H1 (cell line): ENCODE measurements at regions of chr11 and their contacts with region 1.

Region 1: DNA sequence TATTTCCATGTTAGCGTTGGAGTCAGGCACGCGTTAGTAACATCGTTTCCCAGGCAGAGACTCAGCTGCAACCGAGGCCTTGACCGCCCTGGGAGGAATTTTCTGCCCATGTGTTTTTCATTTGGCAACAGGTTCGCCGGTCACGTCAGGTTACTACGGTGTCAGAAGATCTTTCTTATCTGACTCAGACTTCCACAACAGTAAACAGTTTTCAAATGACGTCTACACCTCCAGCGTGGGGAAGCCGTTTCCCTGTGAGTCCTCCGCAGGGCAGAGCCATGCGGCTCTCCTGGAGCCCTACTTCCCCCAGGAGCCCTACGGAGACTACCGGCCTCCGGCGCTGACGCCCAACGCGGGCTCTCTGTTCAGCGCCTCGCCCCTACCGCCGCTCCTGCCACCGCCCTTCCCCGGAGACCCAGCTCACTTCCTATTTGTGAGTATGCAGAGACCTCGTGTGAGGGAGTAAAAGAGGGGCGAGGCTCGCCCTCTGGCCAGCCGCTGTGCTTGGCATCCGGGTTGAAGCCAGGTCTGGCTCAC is 14.3 kb upstream of the POU2AF3 start:
- DNase-seq: no peak
- H3K4me3 ChIP-seq: no peak overlapping the region
- H3K27ac ChIP-seq: no peak overlapping the region
- H3K4me1 ChIP-seq: peaks cover 0 to 3% (median 0%) of the 10 kb centered on the region in 4 experiments; a peak in 2 of 7 replicates
- H3K27me3 ChIP-seq: no peaks in the 10 kb centered on the region
- CTCF ChIP-seq: no peak
- EP300 ChIP-seq: no peak
- POLR2A ChIP-seq: no peak
- RAD21 ChIP-seq: no peak

Region 2: DNA sequence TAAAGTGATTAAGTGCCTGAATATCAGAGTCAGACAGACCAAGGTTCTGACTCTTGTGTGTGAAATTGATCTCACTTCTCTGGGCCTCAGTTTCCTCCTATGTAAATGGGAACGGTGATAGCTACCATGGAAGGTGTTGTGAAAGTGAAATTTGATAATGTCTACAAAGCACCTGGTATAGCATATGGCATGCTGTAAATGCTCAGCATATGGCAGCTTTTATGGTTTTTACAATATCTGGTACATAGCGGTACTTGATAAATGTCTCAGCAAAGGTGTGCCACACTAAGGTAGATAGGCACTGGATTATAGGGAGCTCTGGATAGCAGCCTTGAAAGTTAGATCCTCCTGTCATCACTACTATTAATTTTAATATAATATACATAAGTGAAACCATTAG is 18.6 kb before region 1 on chr11:
- CTCF ChIA-PET with region 1: interaction called, 11 read pairs
- POLR2A ChIA-PET with region 1: no interaction called
- DNase-seq: no peak
- H3K4me3 ChIP-seq: no peak overlapping the region
- H3K27ac ChIP-seq: no peak overlapping the region
- H3K4me1 ChIP-seq: no peaks in the 10 kb centered on the region
- H3K27me3 ChIP-seq: no peaks in the 10 kb centered on the region
- CTCF ChIP-seq: no peak
- EP300 ChIP-seq: no peak
- POLR2A ChIP-seq: no peak
- RAD21 ChIP-seq: no peak

Region 3: GRCh38 chr11:111299101-111300026 is 15.4 kb after region 1 on chr11:
- CTCF ChIA-PET with region 1: interaction called, 11 read pairs
- POLR2A ChIA-PET with region 1: interaction called, 4 read pairs
- DNase-seq: peak in 1 of 2 experiments; percentile 83
- H3K4me3 ChIP-seq: peak overlapping the region; percentile 69 to 95 (median 76)
- H3K27ac ChIP-seq: no peak overlapping the region
- H3K4me1 ChIP-seq: peaks cover 1 to 9% (median 6%) of the 10 kb centered on the region in 4 experiments; a peak in 6 of 7 replicates
- H3K27me3 ChIP-seq: peaks cover 0 to 33% (median 16%) of the 10 kb centered on the region in 4 experiments; a peak in 5 of 7 replicates
- CTCF ChIP-seq: peak; percentile 49 to 69 (median 64)
- EP300 ChIP-seq: no peak
- POLR2A ChIP-seq: peak in 1 of 2 experiments; percentile 52; a peak in 1 of 3 replicates
- RAD21 ChIP-seq: peak in 1 of 2 experiments; percentile 34; a peak in 1 of 4 replicates

Region 4: DNA sequence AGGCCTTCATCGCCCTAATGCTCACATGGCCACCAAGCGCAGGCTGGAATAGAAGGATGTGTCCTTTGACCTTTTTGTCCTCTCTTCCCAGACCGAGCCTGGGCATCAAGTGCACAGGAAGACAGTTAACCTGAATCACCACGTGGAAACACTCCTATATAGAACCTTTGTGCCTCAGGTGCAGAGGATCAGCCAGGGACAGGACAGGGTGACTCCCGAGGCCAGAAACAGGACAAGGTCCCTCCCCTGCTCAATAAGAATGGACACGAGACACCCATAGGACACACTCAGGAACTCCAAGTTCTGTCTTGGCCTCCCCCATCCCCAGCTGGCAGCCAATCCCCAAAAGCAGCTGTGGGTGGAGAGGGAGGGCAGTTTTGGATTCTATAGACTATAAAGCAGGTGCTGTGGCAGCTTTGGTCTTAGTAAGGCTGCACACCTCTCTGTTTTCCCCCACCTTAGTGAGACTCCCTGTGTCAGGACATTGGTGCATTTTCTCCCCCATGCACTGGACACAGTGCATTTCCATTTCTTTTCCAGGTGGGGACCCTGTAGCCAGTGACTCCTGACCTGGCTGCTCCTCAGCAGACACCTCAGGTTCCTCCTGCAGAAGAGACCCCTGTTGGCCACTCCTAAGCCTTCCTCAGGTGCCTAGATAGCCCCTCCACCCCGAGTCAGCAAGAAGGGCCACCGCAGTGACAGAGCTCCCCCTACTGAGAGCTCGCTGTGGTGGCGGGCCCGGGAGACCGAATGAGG is 138.7 kb after region 1 on chr11:
- CTCF ChIA-PET with region 1: interaction called, 484 read pairs
- POLR2A ChIA-PET with region 1: interaction called, 3 read pairs
- DNase-seq: peak; percentile 56 to 87
- H3K4me3 ChIP-seq: no peak overlapping the region
- H3K27ac ChIP-seq: no peak overlapping the region
- H3K4me1 ChIP-seq: no peaks in the 10 kb centered on the region
- H3K27me3 ChIP-seq: no peaks in the 10 kb centered on the region
- CTCF ChIP-seq: peak; percentile 92 to 99 (median 98)
- EP300 ChIP-seq: no peak
- POLR2A ChIP-seq: no peak
- RAD21 ChIP-seq: peak; percentile 99

Region 5: DNA sequence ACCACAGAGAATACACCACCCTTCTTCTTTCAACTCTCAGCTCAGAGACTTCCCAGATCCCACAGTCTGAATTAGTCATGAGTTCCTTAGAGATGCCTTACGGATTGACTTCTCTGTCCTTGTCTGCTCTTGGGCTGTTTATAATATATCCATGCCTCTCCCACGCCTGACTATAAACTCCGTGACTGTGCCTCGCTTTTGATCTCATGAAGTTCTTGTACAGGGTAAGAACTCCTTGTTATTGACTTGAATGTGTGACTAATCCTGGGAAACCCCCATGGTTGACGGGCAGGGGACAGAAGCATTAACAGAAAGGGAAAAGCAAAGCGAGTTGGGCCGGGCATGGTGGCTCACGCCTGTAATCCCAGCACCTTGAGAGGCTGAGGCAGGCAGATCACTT is 157.4 kb after region 1 on chr11:
- CTCF ChIA-PET with region 1: interaction called, 50 read pairs
- POLR2A ChIA-PET with region 1: no interaction called
- DNase-seq: no peak
- H3K4me3 ChIP-seq: no peak overlapping the region
- H3K27ac ChIP-seq: no peak overlapping the region
- H3K4me1 ChIP-seq: peaks cover 0 to 8% (median 5%) of the 10 kb centered on the region in 4 experiments; a peak in 4 of 7 replicates
- H3K27me3 ChIP-seq: 0 out of 7 replicates have a peak, but pooled peaks cover 0 to 2% (median 1%) of the 10 kb centered on the region in 4 experiments
- CTCF ChIP-seq: no peak
- EP300 ChIP-seq: no peak
- POLR2A ChIP-seq: no peak
- RAD21 ChIP-seq: no peak